Endothelial cell of umbilical vein (primary cell): ENCODE measurements at regions of chr15 and their contacts with region 1.

Region 1: GRCh38 chr15:81274931-81275707 is 48.8 kb downstream of the STARD5 start:
- DNase-seq: peak; percentile 75
- H3K4me3 ChIP-seq: no peak overlapping the region
- H3K27ac ChIP-seq: no peak overlapping the region
- H3K4me1 ChIP-seq: no peaks in the 10 kb centered on the region
- H3K27me3 ChIP-seq: peaks cover 7 to 12% of the 10 kb centered on the region in 2 experiments
- CTCF ChIP-seq: peak; percentile 74 to 89
- POLR2A ChIP-seq: no peak

Region 2: DNA sequence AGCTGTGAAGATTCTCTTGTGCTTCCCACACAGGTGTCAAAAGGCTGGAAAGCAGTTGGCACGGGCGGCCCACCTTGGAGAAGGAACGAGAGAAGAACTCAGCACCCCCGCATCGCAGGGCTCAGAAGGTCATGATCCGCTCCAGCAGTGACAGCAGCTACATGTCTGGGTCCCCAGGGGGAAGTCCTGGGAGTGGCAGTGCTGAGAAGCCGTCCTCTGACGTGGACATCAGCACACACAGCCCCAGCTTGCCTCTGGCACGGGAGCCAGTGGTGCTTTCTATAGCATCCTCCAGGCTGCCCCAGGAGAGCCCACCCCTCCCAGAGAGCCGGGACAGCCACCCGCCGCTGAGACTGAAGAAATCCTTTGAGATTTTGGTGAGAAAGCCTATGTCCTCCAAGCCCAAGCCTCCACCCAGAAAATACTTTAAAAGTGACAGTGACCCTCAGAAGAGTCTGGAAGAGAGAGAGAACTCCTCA is 17.4 kb after region 1 on chr15:
- CTCF ChIA-PET with region 1: interaction called, 28 read pairs
- POLR2A ChIA-PET with region 1: no interaction called
- dilution Hi-C with region 1: no loop called
- intact Hi-C with region 1: no loop called
- DNase-seq: no peak
- H3K4me3 ChIP-seq: no peak overlapping the region
- H3K27ac ChIP-seq: no peak overlapping the region
- H3K4me1 ChIP-seq: peaks cover 8% of the 10 kb centered on the region
- H3K27me3 ChIP-seq: peaks cover 0 to 5% of the 10 kb centered on the region in 2 experiments
- CTCF ChIP-seq: no peak
- POLR2A ChIP-seq: no peak

Region 3: DNA sequence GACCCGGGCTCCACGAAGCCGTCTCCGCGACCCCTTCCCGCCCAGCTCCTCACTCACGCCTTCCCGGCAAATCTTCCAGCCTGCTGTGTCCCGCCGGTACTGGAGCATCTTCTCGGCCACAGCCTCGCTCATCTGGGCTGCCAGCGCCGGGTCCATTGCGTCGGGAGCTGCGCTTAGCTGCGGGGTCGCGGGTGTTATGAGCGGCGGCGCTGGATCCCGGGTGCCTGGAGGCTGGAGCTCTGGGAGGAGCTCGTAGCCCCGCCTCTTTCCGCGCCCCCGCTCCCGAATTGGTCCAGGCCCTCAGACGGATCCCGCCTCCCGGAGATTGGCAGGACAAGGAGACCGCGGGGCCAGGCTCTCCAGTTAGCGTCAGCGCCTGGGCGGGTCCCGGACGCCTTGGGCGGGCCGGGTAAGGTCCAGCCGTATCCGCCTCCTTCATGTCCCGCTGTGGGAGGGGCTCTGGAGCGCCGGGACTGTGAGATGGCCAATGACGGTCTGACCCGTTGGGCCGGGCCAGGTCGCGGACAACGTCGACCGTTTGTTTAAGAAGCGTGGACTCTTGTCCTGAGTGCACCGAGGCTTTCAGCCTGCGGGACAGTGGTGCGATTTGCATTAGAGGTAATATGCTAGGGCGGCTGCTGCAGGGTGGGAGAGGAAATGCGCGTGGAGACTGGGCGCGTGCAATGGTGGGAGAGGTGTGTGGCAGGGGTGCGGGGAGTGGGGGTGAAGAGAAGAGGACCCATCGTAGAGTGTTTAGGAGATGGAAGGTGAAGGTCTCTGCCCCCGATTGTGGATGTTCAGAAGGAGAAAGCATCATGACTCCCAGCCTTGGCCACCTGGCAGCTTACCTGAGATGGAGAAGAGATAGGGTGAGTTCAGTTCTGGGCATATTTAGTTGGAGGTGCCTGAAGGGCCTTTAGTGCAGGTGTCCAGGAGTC is 49.1 kb after region 1 on chr15 and contains the start of gene STARD5:
- CTCF ChIA-PET with region 1: interaction called, 14 read pairs
- POLR2A ChIA-PET with region 1: no interaction called
- dilution Hi-C with region 1: no loop called
- intact Hi-C with region 1: no loop called
- DNase-seq: peak; percentile 97
- H3K4me3 ChIP-seq: peak within 1 kb of the TSS; percentile 77 to 89 (median 79)
- H3K27ac ChIP-seq: peak within 1 kb of the TSS; percentile 36
- H3K4me1 ChIP-seq: peaks cover 8% of the 10 kb centered on the region
- H3K27me3 ChIP-seq: peaks cover 0 to 3% of the 10 kb centered on the region in 2 experiments
- CTCF ChIP-seq: no peak
- POLR2A ChIP-seq: peak; percentile 46
- total RNA-seq, gene STARD5: 0.32 and 2.2 TPM in 2 replicates

Region 4: DNA sequence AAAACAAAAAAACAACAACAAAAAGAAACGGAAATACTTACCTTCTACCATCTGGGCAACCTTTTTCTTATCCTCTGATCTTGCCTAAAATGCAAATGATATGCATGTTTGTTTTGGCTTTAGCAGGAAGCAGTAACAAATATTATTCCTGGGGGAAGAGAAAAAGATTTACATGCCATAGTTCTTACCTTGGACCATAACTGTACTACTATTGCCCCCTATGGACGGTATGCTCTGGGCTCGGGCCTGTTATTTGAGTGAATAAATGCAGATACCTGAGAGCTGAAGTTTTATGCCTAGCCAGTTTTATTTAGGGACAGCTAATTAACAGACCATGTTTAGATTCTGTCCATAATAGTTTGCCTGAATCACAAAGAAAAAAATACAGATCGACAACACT is 61.4 kb after region 1 on chr15:
- CTCF ChIA-PET with region 1: interaction called, 12 read pairs
- POLR2A ChIA-PET with region 1: no interaction called
- dilution Hi-C with region 1: no loop called
- intact Hi-C with region 1: loop called (anchors 1 kb)
- DNase-seq: peak; percentile 23
- H3K4me3 ChIP-seq: no peak overlapping the region
- H3K27ac ChIP-seq: no peak overlapping the region
- H3K4me1 ChIP-seq: peaks cover 4% of the 10 kb centered on the region
- H3K27me3 ChIP-seq: peaks cover 3 to 8% of the 10 kb centered on the region in 2 experiments
- CTCF ChIP-seq: peak in 1 of 2 donors; percentile 6
- POLR2A ChIP-seq: no peak

Region 5: DNA sequence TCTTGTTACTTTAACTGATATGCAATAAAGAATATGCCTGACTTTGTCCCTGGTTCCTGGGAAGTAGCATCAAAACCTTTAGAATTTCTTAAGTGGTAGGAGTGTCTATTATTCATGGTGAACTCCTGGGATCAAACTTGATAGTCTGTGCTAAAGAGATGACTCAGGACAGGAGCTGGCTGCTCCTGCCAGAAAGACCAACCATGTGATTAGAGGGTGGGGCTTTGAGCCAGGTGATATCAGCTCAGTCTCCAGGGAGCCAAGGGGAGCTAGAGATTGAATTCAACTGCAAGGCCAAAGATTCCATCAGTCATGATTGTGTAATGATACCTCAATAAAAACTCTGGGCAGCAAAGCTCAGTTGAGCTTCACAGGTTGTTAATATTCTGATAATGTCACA is 119.5 kb after region 1 on chr15:
- CTCF ChIA-PET with region 1: interaction called, 142 read pairs
- POLR2A ChIA-PET with region 1: no interaction called
- dilution Hi-C with region 1: no loop called
- intact Hi-C with region 1: no loop called
- DNase-seq: no peak
- H3K4me3 ChIP-seq: no peak overlapping the region
- H3K27ac ChIP-seq: no peak overlapping the region
- H3K4me1 ChIP-seq: no peaks in the 10 kb centered on the region
- H3K27me3 ChIP-seq: no peaks in the 10 kb centered on the region
- CTCF ChIP-seq: no peak
- POLR2A ChIP-seq: no peak

Region 6: GRCh38 chr15:81400640-81401236 is 125.6 kb after region 1 on chr15:
- CTCF ChIA-PET with region 1: interaction called, 142 read pairs
- POLR2A ChIA-PET with region 1: no interaction called
- dilution Hi-C with region 1: no loop called
- intact Hi-C with region 1: loop called (anchors 1 kb)
- DNase-seq: peak; percentile 71
- H3K4me3 ChIP-seq: no peak overlapping the region
- H3K27ac ChIP-seq: no peak overlapping the region
- H3K4me1 ChIP-seq: no peaks in the 10 kb centered on the region
- H3K27me3 ChIP-seq: peaks cover 3% of the 10 kb centered on the region in 2 experiments
- CTCF ChIP-seq: peak; percentile 49 to 54
- POLR2A ChIP-seq: no peak

Region 7: GRCh38 chr15:81939604-81940440 is 664.7 kb after region 1 on chr15:
- CTCF ChIA-PET with region 1: interaction called, 9 read pairs
- POLR2A ChIA-PET with region 1: no interaction called
- dilution Hi-C with region 1: no loop called
- intact Hi-C with region 1: loop called (anchors 1 kb)
- DNase-seq: peak; percentile 65
- H3K4me3 ChIP-seq: no peak overlapping the region
- H3K27ac ChIP-seq: no peak overlapping the region
- H3K4me1 ChIP-seq: no peaks in the 10 kb centered on the region
- H3K27me3 ChIP-seq: peaks cover 1 to 3% of the 10 kb centered on the region in 2 experiments
- CTCF ChIP-seq: peak; percentile 50 to 61
- POLR2A ChIP-seq: no peak